GM12878 (cell line): ENCODE measurements at regions of chr5 and their contacts with region 1.

Region 1: DNA sequence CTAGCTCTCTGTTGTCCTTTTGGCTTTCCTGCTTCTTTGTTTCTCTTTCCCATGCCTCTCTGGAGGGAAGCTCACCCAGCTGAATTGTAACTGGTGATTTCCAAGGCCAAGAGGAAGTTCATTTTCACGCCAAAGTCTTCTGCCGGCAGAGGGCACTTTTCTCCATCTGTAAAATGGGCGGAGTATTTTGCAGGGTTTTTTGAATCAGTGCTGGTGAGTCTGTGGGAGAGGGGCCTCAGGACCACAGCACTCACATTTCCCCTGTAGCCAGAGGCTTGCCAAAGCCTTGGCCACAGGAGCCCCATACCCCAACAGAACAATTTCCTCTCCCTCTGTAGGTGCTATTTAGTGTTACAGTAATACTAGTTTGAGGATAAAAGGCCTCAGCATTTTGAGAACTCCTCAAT is 42.3 kb upstream of the MATR3 start:
- DNase-seq: peak; percentile 38
- ATAC-seq: peak; percentile 89
- H3K4me3 ChIP-seq: no peak overlapping the region
- H3K27ac ChIP-seq: peak overlapping the region; percentile 38
- H3K4me1 ChIP-seq: peaks cover 14% of the 10 kb centered on the region
- H3K27me3 ChIP-seq: no peaks in the 10 kb centered on the region
- CTCF ChIP-seq: peak; percentile 65 to 78 (median 68)
- EP300 ChIP-seq: no peak
- POLR2A ChIP-seq: no peak
- RAD21 ChIP-seq: peak; percentile 68

Region 2: GRCh38 chr5:139241139-139241538 is 10.1 kb before region 1 on chr5:
- CTCF ChIA-PET with region 1: interaction called, 19 read pairs
- POLR2A ChIA-PET with region 1: interaction called, 4 read pairs
- RAD21 ChIA-PET with region 1: interaction called, 3 read pairs
- SMC1A ChIA-PET with region 1: interaction called, 12 read pairs
- in situ Hi-C with region 1: no loop called
- intact Hi-C with region 1: no loop called
- DNase-seq: no peak
- ATAC-seq: no peak
- H3K4me3 ChIP-seq: no peak overlapping the region
- H3K27ac ChIP-seq: no peak overlapping the region
- H3K4me1 ChIP-seq: peaks cover 2% of the 10 kb centered on the region; the same call in 1 of the 2 replicates
- H3K27me3 ChIP-seq: no peaks in the 10 kb centered on the region
- CTCF ChIP-seq: no peak
- EP300 ChIP-seq: no peak
- POLR2A ChIP-seq: no peak
- RAD21 ChIP-seq: no peak

Region 3: GRCh38 chr5:139273572-139274289 is 22.4 kb after region 1 on chr5:
- CTCF ChIA-PET with region 1: interaction called, 47 read pairs
- POLR2A ChIA-PET with region 1: interaction called, 11 read pairs
- RAD21 ChIA-PET with region 1: interaction called, 28 read pairs
- SMC1A ChIA-PET with region 1: interaction called, 34 read pairs
- in situ Hi-C with region 1: no loop called
- intact Hi-C with region 1: no loop called
- DNase-seq: peak; percentile 61
- ATAC-seq: peak; percentile 87
- H3K4me3 ChIP-seq: peak overlapping the region; percentile 82
- H3K27ac ChIP-seq: peak overlapping the region; percentile 90
- H3K4me1 ChIP-seq: peaks cover 38% of the 10 kb centered on the region
- H3K27me3 ChIP-seq: no peaks in the 10 kb centered on the region
- CTCF ChIP-seq: peak in 2 of 3 experiments; percentile 25 to 37; a peak in 2 of 6 replicates
- EP300 ChIP-seq: peak in 1 of 2 experiments; percentile 57; a peak in 2 of 4 replicates
- POLR2A ChIP-seq: peak; percentile 95
- RAD21 ChIP-seq: 0 out of 2 replicates have a peak, but pooled peaks have one; percentile 18

Region 4: GRCh38 chr5:139335811-139336210 is 84.5 kb after region 1 on chr5:
- CTCF ChIA-PET with region 1: interaction called, 24 read pairs
- POLR2A ChIA-PET with region 1: interaction called, 4 read pairs
- RAD21 ChIA-PET with region 1: interaction called, 17 read pairs
- SMC1A ChIA-PET with region 1: interaction called, 10 read pairs
- in situ Hi-C with region 1: no loop called
- intact Hi-C with region 1: no loop called
- DNase-seq: no peak
- ATAC-seq: 0 out of 3 replicates have a peak, but pooled peaks have one; percentile 10
- H3K4me3 ChIP-seq: no peak overlapping the region
- H3K27ac ChIP-seq: no peak overlapping the region
- H3K4me1 ChIP-seq: peaks cover 4% of the 10 kb centered on the region
- H3K27me3 ChIP-seq: no peaks in the 10 kb centered on the region
- CTCF ChIP-seq: no peak
- EP300 ChIP-seq: no peak
- POLR2A ChIP-seq: no peak
- RAD21 ChIP-seq: no peak

Region 5: GRCh38 chr5:139358064-139358463 is 106.8 kb after region 1 on chr5:
- CTCF ChIA-PET with region 1: no interaction called
- POLR2A ChIA-PET with region 1: no interaction called
- RAD21 ChIA-PET with region 1: no interaction called
- SMC1A ChIA-PET with region 1: no interaction called
- in situ Hi-C with region 1: no loop called
- intact Hi-C with region 1: no loop called
- DNase-seq: no peak
- ATAC-seq: no peak
- H3K4me3 ChIP-seq: no peak overlapping the region
- H3K27ac ChIP-seq: no peak overlapping the region
- H3K4me1 ChIP-seq: no peaks in the 10 kb centered on the region
- H3K27me3 ChIP-seq: no peaks in the 10 kb centered on the region
- CTCF ChIP-seq: no peak
- EP300 ChIP-seq: no peak
- POLR2A ChIP-seq: no peak
- RAD21 ChIP-seq: no peak

Region 6: GRCh38 chr5:139385061-139386049 is 134.1 kb after region 1 on chr5:
- CTCF ChIA-PET with region 1: interaction called, 35 read pairs
- POLR2A ChIA-PET with region 1: no interaction called
- RAD21 ChIA-PET with region 1: interaction called, 10 read pairs
- SMC1A ChIA-PET with region 1: interaction called, 26 read pairs
- in situ Hi-C with region 1: no loop called
- intact Hi-C with region 1: loop called (anchors 5 kb)
- DNase-seq: no peak
- ATAC-seq: peak; percentile 2; the same call in 2 of the 3 replicates
- H3K4me3 ChIP-seq: peak overlapping the region; percentile 17; the same call in 1 of the 2 replicates
- H3K27ac ChIP-seq: peak overlapping the region; percentile 62
- H3K4me1 ChIP-seq: peaks cover 42% of the 10 kb centered on the region
- H3K27me3 ChIP-seq: no peaks in the 10 kb centered on the region
- CTCF ChIP-seq: peak; percentile 9 to 29 (median 9); a peak in 2 of 6 replicates
- EP300 ChIP-seq: no peak
- POLR2A ChIP-seq: no peak
- RAD21 ChIP-seq: 0 out of 2 replicates have a peak, but pooled peaks have one; percentile 17

Region 7: GRCh38 chr5:139417214-139417613 is 165.9 kb after region 1 on chr5:
- CTCF ChIA-PET with region 1: interaction called, 18 read pairs
- POLR2A ChIA-PET with region 1: no interaction called
- RAD21 ChIA-PET with region 1: interaction called, 7 read pairs
- SMC1A ChIA-PET with region 1: interaction called, 9 read pairs
- in situ Hi-C with region 1: no loop called
- intact Hi-C with region 1: no loop called
- DNase-seq: no peak
- ATAC-seq: no peak
- H3K4me3 ChIP-seq: no peak overlapping the region
- H3K27ac ChIP-seq: no peak overlapping the region
- H3K4me1 ChIP-seq: peaks cover 21% of the 10 kb centered on the region
- H3K27me3 ChIP-seq: no peaks in the 10 kb centered on the region
- CTCF ChIP-seq: no peak
- EP300 ChIP-seq: no peak
- POLR2A ChIP-seq: no peak
- RAD21 ChIP-seq: no peak